ENCODE measurements at regions of chr9 and their contacts with region 1.

Region 1: GRCh38 chr9:98707166-98708102 is 1.3 kb downstream of the GABBR2 start:
- DNase-seq: peak; percentile 77
- H3K4me3 ChIP-seq: peak overlapping the region; percentile 28 to 82 (median 48)
- H3K27ac ChIP-seq: no peak overlapping the region
- H3K4me1 ChIP-seq: peaks cover 12% of the 10 kb centered on the region
- H3K27me3 ChIP-seq: peaks cover 2 to 11% of the 10 kb centered on the region in 2 experiments
- CTCF ChIP-seq: peak; percentile 72 to 84
- POLR2A ChIP-seq: no peak

Region 2: GRCh38 chr9:98536542-98537173 is 170.8 kb before region 1 on chr9:
- CTCF ChIA-PET with region 1: interaction called, 7 read pairs
- POLR2A ChIA-PET with region 1: no interaction called
- dilution Hi-C with region 1: no loop called
- intact Hi-C with region 1: loop called (anchors 1 kb)
- DNase-seq: no peak
- H3K4me3 ChIP-seq: no peak overlapping the region
- H3K27ac ChIP-seq: no peak overlapping the region
- H3K4me1 ChIP-seq: peaks cover 5% of the 10 kb centered on the region
- H3K27me3 ChIP-seq: no peaks in the 10 kb centered on the region
- CTCF ChIP-seq: peak; percentile 14 to 27
- POLR2A ChIP-seq: no peak

Region 3: GRCh38 chr9:98607787-98608186 is 99.6 kb before region 1 on chr9:
- CTCF ChIA-PET with region 1: interaction called, 4 read pairs
- POLR2A ChIA-PET with region 1: no interaction called
- dilution Hi-C with region 1: no loop called
- intact Hi-C with region 1: loop called (anchors 5 kb)
- DNase-seq: peak; percentile 91
- H3K4me3 ChIP-seq: peak overlapping the region in 1 of 3 experiments; percentile 26
- H3K27ac ChIP-seq: peak overlapping the region; percentile 97
- H3K4me1 ChIP-seq: peaks cover 30% of the 10 kb centered on the region
- H3K27me3 ChIP-seq: no peaks in the 10 kb centered on the region
- CTCF ChIP-seq: no peak
- POLR2A ChIP-seq: no peak

Region 4: DNA sequence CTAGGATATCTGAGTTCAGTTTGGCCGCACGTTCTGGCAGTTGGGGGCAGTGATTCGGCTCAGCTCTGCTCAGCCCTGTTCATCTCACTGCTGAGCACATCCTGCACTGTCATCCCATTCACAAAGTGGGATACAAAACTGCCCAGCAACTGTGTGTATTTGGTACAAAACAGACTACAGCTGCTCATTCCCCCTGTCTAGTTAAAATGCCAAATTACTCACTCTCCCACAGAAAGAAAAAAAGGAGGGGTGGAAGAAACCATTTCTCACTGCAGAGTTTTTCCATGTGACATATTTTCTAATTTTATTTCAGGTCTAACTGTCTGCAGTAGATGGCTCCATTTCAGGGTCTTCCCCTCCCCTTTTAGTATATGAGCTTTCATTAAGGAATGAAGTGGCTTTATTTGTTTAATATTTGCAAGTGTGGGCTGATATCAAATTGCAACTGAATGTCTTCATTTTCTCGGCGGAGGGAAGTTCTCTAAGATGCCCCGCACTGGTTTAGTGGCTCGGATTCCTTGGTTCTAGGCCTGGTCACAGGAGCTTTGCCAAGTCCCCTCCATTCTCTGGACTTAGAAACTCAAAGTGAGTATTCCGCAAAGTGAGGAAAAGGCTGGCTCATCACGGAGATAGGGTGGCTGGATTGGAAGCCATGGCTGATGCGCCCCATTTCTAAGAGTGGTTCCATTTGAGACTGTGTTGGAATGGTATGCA is 251.0 kb after region 1 on chr9:
- CTCF ChIA-PET with region 1: no interaction called
- POLR2A ChIA-PET with region 1: no interaction called
- dilution Hi-C with region 1: no loop called
- intact Hi-C with region 1: no loop called
- DNase-seq: no peak
- H3K4me3 ChIP-seq: no peak overlapping the region
- H3K27ac ChIP-seq: no peak overlapping the region
- H3K4me1 ChIP-seq: no peaks in the 10 kb centered on the region
- H3K27me3 ChIP-seq: no peaks in the 10 kb centered on the region
- CTCF ChIP-seq: no peak
- POLR2A ChIP-seq: no peak

Region 5: GRCh38 chr9:99076483-99077171 is 369.2 kb after region 1 on chr9:
- CTCF ChIA-PET with region 1: no interaction called
- POLR2A ChIA-PET with region 1: no interaction called
- dilution Hi-C with region 1: no loop called
- intact Hi-C with region 1: no loop called
- DNase-seq: no peak
- H3K4me3 ChIP-seq: no peak overlapping the region
- H3K27ac ChIP-seq: no peak overlapping the region
- H3K4me1 ChIP-seq: no peaks in the 10 kb centered on the region
- H3K27me3 ChIP-seq: no peaks in the 10 kb centered on the region
- CTCF ChIP-seq: no peak
- POLR2A ChIP-seq: no peak